CD4-positive, alpha-beta memory T cell (primary cell): ENCODE measurements at regions of chr2 and their contacts with region 1.

Region 1: DNA sequence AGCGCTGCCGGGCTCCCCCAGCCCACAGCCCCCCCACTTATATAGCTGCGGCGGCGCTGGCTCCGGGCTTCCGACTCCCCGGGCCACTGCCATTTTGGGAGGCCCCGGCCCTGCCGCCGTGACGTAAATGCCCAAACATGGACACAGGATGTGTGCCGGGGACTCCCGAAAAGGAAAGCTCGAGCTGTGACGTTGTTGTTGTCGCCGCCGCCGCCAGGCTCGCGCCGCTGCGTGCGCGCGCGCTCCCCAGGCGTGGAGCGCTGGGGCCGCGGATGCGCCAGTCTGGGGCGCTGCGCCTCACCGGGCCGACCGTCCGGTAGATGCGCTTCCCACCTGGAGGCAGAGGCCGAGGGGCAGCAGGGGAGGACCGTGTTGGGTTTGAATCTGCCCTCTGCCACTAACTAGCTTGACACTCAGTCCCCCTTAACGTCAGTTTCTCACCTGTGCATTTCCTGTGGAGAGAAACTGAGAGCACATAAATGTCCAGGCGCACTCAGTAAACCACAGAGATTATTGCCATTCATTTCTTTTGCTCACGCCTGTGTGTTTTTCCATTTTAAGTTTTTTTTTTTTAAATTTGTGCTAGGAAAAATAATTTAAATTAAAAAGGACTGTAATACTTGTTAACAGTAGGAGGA is at the start of gene EGR4:
- DNase-seq: peak; percentile 90 to 97 (median 92)
- H3K4me3 ChIP-seq: peak within 1 kb of the TSS; percentile 55 to 71
- H3K4me3 Mint-ChIP-seq: peak within 1 kb of the TSS; percentile 64 to 87 (median 78)
- H3K27ac ChIP-seq: no peak within 1 kb of the TSS
- H3K27ac Mint-ChIP-seq: peak within 1 kb of the TSS in 4 of 7 donors; percentile 69 to 77 (median 72)
- H3K4me1 ChIP-seq: peaks cover 28% of the 10 kb centered on the region
- H3K4me1 Mint-ChIP-seq: peaks cover 6 to 22% (median 15%) of the 10 kb centered on the region in 4 donors
- H3K27me3 ChIP-seq: peaks cover 30% of the 10 kb centered on the region
- H3K27me3 Mint-ChIP-seq: peaks cover 37 to 42% of the 10 kb centered on the region in 2 donors
- total RNA-seq, gene EGR4: not detected

Region 2: DNA sequence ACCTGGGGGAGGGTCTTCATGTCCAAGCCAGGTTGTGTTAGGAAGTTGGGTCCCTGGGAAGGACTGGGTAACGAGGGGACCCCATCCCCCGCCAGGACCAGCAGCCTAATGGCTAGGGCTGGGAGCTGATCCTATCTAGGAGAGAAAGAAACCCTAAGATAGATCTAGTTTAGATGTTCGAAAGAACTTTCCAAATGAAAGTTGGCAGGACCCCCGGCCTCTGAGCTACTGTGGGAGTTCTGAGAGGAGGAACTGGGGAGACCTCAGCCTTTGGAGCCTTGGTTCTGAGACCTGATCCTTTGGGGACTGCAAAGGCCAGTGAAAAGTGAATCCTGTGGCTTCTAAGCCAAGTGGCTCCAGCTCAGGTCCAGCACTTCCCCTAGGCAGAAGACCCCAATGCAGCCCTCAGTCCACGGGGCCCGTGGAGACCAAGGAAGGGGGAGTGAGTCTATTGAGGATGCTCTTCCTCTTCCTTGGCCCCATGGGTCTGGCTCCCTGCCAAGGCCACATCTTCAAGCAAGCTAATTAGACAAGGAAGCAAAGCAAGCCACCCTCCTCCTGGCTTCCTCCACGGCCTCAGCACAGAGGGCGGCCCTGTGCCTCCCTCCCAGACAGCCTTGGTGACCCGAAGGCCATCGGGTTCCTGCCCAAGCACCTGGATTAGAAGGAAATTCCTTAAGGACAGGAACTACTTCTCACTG is 36.1 kb before region 1 on chr2:
- CTCF ChIA-PET with region 1: interaction called, 13 read pairs
- POLR2A ChIA-PET with region 1: no interaction called
- intact Hi-C with region 1: no loop called
- DNase-seq: peak in 3 of 5 donors; percentile 21 to 36 (median 24)
- H3K4me3 ChIP-seq: no peak overlapping the region
- H3K4me3 Mint-ChIP-seq: no peak overlapping the region
- H3K27ac ChIP-seq: no peak overlapping the region
- H3K27ac Mint-ChIP-seq: peak overlapping the region in 4 of 7 donors; percentile 22 to 75 (median 62)
- H3K4me1 ChIP-seq: peaks cover 8% of the 10 kb centered on the region
- H3K4me1 Mint-ChIP-seq: peaks cover 1 to 21% (median 5%) of the 10 kb centered on the region in 4 donors
- H3K27me3 ChIP-seq: no peaks in the 10 kb centered on the region
- H3K27me3 Mint-ChIP-seq: no peaks in the 10 kb centered on the region

Region 3: GRCh38 chr2:73268830-73269685 is 24.6 kb before region 1 on chr2:
- CTCF ChIA-PET with region 1: interaction called, 11 read pairs
- POLR2A ChIA-PET with region 1: interaction called, 6 read pairs
- intact Hi-C with region 1: loop called (anchors 1 kb)
- DNase-seq: peak; percentile 77 to 82 (median 80)
- H3K4me3 ChIP-seq: peak overlapping the region in 1 of 2 donors; percentile 45
- H3K4me3 Mint-ChIP-seq: peak overlapping the region in 7 of 8 donors; percentile 25 to 70 (median 67)
- H3K27ac ChIP-seq: peak overlapping the region; percentile 46
- H3K27ac Mint-ChIP-seq: no peak overlapping the region
- H3K4me1 ChIP-seq: peaks cover 24% of the 10 kb centered on the region
- H3K4me1 Mint-ChIP-seq: peaks cover 18 to 27% (median 23%) of the 10 kb centered on the region in 4 donors
- H3K27me3 ChIP-seq: no peaks in the 10 kb centered on the region
- H3K27me3 Mint-ChIP-seq: no peaks in the 10 kb centered on the region